ENCODE measurements at regions of chr10 and their contacts with region 1.

Region 1: GRCh38 chr10:80669485-80669884 is 131.8 kb downstream of the SH2D4B start:
- DNase-seq: no peak
- ATAC-seq: no peak
- H3K4me3 ChIP-seq: no peak overlapping the region
- H3K4me3 Mint-ChIP-seq: no peak overlapping the region
- H3K27ac ChIP-seq: no peak overlapping the region
- H3K27ac Mint-ChIP-seq: no peak overlapping the region
- H3K4me1 ChIP-seq: no peaks in the 10 kb centered on the region
- H3K4me1 Mint-ChIP-seq: no peaks in the 10 kb centered on the region
- H3K27me3 ChIP-seq: peaks cover 0 to 12% of the 10 kb centered on the region in 2 experiments
- H3K27me3 Mint-ChIP-seq: peaks cover 9 to 11% of the 10 kb centered on the region in 2 donors

Region 2: GRCh38 chr10:80408242-80409101 is 261.0 kb before region 1 on chr10 and contains the start of gene PRXL2A:
- CTCF ChIA-PET with region 1: interaction called in 1 of 2 experiments, 11 read pairs
- POLR2A ChIA-PET with region 1: no interaction called
- DNase-seq: peak; percentile 35 to 86 (median 72)
- ATAC-seq: peak; percentile 96 to 98 (median 97)
- H3K4me3 ChIP-seq: peak within 1 kb of the TSS; percentile 76 to 92
- H3K4me3 Mint-ChIP-seq: peak within 1 kb of the TSS; percentile 89 to 91 (median 90)
- H3K27ac ChIP-seq: no peak within 1 kb of the TSS
- H3K27ac Mint-ChIP-seq: peak within 1 kb of the TSS; percentile 67 to 89
- H3K4me1 ChIP-seq: peaks cover 0 to 19% of the 10 kb centered on the region in 2 experiments
- H3K4me1 Mint-ChIP-seq: peaks cover 24 to 39% (median 35%) of the 10 kb centered on the region in 3 donors
- H3K27me3 ChIP-seq: peaks cover 0 to 26% of the 10 kb centered on the region in 2 experiments
- H3K27me3 Mint-ChIP-seq: peaks cover 0 to 7% of the 10 kb centered on the region in 2 donors
- total RNA-seq, gene PRXL2A: 2.9 to 6.3 (median 5.2) TPM

Region 3: DNA sequence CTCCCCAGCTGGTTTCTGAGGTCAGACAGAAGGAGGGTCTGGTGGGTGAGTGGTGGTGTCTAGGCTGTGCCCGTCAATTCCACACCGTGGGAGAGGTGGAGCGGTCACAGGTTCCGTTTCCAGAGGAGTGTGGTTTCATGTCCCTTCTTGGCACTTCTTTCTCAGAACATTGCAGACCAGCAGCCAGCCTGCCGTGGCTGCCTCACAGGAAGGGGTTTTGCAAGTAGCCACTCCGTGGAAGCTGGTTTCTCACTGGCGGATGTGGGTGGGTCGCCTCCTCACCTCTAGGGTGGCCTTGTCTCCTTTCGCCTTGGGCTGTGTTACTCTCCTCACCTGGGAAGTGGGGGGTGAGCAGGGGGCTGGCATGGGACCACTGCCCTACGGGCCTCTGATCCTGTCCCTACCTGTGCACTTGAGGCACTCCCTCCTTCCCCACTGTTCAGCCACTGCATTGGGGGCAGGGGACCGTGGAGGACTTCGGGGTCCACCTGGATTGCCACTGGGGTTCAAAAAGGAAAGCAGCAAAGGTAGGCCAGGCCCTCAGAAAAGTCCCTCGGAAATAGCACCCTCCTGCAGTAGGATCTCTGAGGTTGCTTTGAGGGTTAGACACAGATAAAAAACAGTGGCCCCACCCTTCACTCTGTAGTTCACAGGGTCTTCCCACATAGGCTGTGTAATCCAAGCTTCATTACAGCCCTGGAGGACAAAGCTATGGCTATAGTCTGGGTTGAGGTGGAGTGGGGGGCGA is 181.5 kb before region 1 on chr10:
- CTCF ChIA-PET with region 1: no interaction called
- POLR2A ChIA-PET with region 1: no interaction called
- DNase-seq: peak in 33 of 35 experiments; percentile 39 to 78 (median 60)
- ATAC-seq: peak; percentile 71 to 79 (median 76)
- H3K4me3 ChIP-seq: peak overlapping the region; percentile 20 to 25
- H3K4me3 Mint-ChIP-seq: peak overlapping the region; percentile 57 to 71 (median 68)
- H3K27ac ChIP-seq: peak overlapping the region; percentile 73
- H3K27ac Mint-ChIP-seq: peak overlapping the region; percentile 86 to 94
- H3K4me1 ChIP-seq: peaks cover 85 to 94% of the 10 kb centered on the region in 2 experiments
- H3K4me1 Mint-ChIP-seq: peaks cover 97 to 99% (median 97%) of the 10 kb centered on the region in 3 donors
- H3K27me3 ChIP-seq: no peaks in the 10 kb centered on the region
- H3K27me3 Mint-ChIP-seq: no peaks in the 10 kb centered on the region

Region 4: GRCh38 chr10:80619036-80619435 is 50.4 kb before region 1 on chr10:
- CTCF ChIA-PET with region 1: no interaction called
- POLR2A ChIA-PET with region 1: no interaction called
- DNase-seq: no peak
- ATAC-seq: no peak
- H3K4me3 ChIP-seq: no peak overlapping the region
- H3K4me3 Mint-ChIP-seq: no peak overlapping the region
- H3K27ac ChIP-seq: no peak overlapping the region
- H3K27ac Mint-ChIP-seq: no peak overlapping the region
- H3K4me1 ChIP-seq: no peaks in the 10 kb centered on the region
- H3K4me1 Mint-ChIP-seq: no peaks in the 10 kb centered on the region
- H3K27me3 ChIP-seq: no peaks in the 10 kb centered on the region
- H3K27me3 Mint-ChIP-seq: no peaks in the 10 kb centered on the region

Region 5: GRCh38 chr10:80739963-80740715 is 70.7 kb after region 1 on chr10:
- CTCF ChIA-PET with region 1: no interaction called
- POLR2A ChIA-PET with region 1: no interaction called
- DNase-seq: no peak
- ATAC-seq: no peak
- H3K4me3 ChIP-seq: no peak overlapping the region
- H3K4me3 Mint-ChIP-seq: no peak overlapping the region
- H3K27ac ChIP-seq: no peak overlapping the region
- H3K27ac Mint-ChIP-seq: no peak overlapping the region
- H3K4me1 ChIP-seq: no peaks in the 10 kb centered on the region
- H3K4me1 Mint-ChIP-seq: no peaks in the 10 kb centered on the region
- H3K27me3 ChIP-seq: peaks cover 2 to 5% of the 10 kb centered on the region in 2 experiments
- H3K27me3 Mint-ChIP-seq: peaks cover 10 to 16% of the 10 kb centered on the region in 2 donors

Region 6: DNA sequence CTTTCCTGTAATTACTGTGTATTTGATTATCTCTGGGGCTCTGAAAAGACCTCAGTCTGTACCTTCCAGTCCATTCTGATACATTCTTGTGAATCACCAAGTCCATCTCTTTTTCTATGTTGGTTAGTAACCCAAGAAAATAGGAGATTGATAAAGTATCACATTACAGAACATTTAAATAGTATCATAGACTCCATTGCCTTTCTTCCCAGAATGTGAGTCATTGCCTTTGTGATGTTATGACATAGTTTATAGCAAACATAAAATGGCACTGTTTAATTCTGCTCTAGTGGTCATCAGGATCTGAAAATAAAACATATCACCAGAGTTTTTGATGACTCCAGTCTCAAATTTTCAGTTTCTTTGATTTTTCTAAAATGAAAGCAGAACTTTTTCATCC is 1283.9 kb after region 1 on chr10:
- CTCF ChIA-PET with region 1: no interaction called
- POLR2A ChIA-PET with region 1: no interaction called
- DNase-seq: no peak
- ATAC-seq: no peak
- H3K4me3 ChIP-seq: no peak overlapping the region
- H3K4me3 Mint-ChIP-seq: no peak overlapping the region
- H3K27ac ChIP-seq: no peak overlapping the region
- H3K27ac Mint-ChIP-seq: no peak overlapping the region
- H3K4me1 ChIP-seq: no peaks in the 10 kb centered on the region
- H3K4me1 Mint-ChIP-seq: no peaks in the 10 kb centered on the region
- H3K27me3 ChIP-seq: no peaks in the 10 kb centered on the region
- H3K27me3 Mint-ChIP-seq: no peaks in the 10 kb centered on the region